ENCODE measurements at regions of chr9 and their contacts with region 1.

Region 1: DNA sequence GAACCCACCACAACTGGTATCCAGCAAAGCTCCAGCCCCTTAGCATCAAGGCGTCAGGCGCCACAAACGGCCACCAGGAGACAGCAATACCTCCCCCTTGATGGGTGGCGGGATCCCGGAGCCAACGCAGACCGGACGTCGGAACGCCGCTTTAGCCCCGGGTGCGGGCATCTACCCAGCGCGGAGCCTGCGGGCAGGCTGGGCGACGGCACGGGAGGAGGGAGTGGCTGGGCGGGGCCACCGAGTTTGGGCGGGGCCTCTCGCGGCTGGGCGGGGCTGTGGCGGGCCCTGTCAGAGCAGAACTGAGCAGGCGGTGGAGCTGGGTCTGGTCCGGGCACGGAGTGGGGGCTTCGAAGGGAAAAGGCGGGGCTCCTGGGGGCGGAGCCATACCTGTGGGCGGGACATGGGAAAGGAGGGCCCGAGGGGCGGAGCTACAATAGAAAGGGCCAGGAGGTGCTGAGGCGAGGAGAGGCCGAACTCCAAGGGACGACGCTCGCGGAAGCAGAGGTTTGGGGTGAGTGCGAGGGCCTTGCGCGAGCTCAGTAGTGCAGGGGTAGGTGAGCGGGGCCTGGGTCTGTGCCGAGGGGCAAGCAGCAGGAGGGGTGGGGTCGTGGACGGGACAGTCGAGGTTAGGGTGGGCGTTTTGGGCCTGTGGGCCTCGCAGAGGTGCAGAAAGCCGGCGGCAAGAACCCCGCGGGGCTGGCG is 40.2 kb upstream of the GARNL3 start:
- DNase-seq: peak; percentile 91 to 96 (median 95)
- ATAC-seq: peak; percentile 88 to 90 (median 88)
- H3K4me3 ChIP-seq: peak overlapping the region; percentile 38 to 96 (median 62)
- H3K27ac ChIP-seq: peak overlapping the region; percentile 66 to 88 (median 82)
- H3K4me1 ChIP-seq: peaks cover 0 to 25% (median 9%) of the 10 kb centered on the region in 12 donors
- H3K27me3 ChIP-seq: no peaks in the 10 kb centered on the region
- CTCF ChIP-seq: peak in 6 of 12 donors; percentile 20 to 38 (median 25)
- POLR2A ChIP-seq: peak in 1 of 2 donors; percentile 30

Region 2: GRCh38 chr9:127177236-127177635 is 47.1 kb before region 1 on chr9:
- intact Hi-C with region 1: no loop called
- DNase-seq: peak in 2 of 5 donors; percentile 6 to 14
- ATAC-seq: no peak
- H3K4me3 ChIP-seq: no peak overlapping the region
- H3K27ac ChIP-seq: no peak overlapping the region
- H3K4me1 ChIP-seq: peaks cover 0 to 46% (median 20%) of the 10 kb centered on the region in 12 donors
- H3K27me3 ChIP-seq: no peaks in the 10 kb centered on the region
- CTCF ChIP-seq: no peak
- POLR2A ChIP-seq: no peak

Region 3: GRCh38 chr9:127283917-127284316 is 59.6 kb after region 1 on chr9:
- intact Hi-C with region 1: loop called in 1 of 10 experiments (anchors 5 kb)
- DNase-seq: no peak
- ATAC-seq: no peak
- H3K4me3 ChIP-seq: no peak overlapping the region
- H3K27ac ChIP-seq: peak overlapping the region in 1 of 12 donors; percentile 49
- H3K4me1 ChIP-seq: peaks cover 0 to 48% (median 7%) of the 10 kb centered on the region in 12 donors
- H3K27me3 ChIP-seq: no peaks in the 10 kb centered on the region
- CTCF ChIP-seq: peak in 8 of 12 donors; percentile 21 to 61 (median 38)
- POLR2A ChIP-seq: no peak

Region 4: DNA sequence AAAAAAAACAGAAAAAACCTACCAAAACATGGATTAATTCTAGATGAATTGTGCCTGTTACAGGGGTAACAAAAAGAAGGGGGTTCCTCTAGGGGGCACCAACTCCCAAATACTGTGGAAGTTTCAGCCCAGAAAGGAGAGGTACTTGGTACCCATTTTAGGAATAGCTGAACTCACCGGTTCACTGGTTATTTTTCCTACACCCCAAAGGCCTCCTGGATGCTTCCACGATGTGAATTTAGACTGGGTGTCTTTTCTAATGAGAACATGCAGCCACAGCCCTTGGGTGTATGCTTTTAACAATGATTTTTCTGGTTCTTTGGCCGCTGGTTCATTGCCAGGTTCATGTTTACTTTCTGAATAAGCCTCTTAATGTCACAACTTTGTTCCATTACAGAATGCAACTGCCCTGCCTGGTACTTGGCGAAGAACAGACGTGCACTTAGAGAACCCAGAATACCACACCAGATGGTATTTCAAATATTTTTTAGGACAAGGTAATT is 87.0 kb after region 1 on chr9:
- intact Hi-C with region 1: loop called in 2 of 10 experiments (anchors 10 kb)
- DNase-seq: peak in 4 of 5 donors; percentile 25 to 45 (median 34)
- ATAC-seq: peak; percentile 25 to 57 (median 54)
- H3K4me3 ChIP-seq: peak overlapping the region in 1 of 12 donors; percentile 7
- H3K27ac ChIP-seq: peak overlapping the region; percentile 45 to 88 (median 72)
- H3K4me1 ChIP-seq: peaks cover 0 to 59% (median 31%) of the 10 kb centered on the region in 12 donors
- H3K27me3 ChIP-seq: no peaks in the 10 kb centered on the region
- CTCF ChIP-seq: peak; percentile 26 to 72 (median 58)
- POLR2A ChIP-seq: no peak

Region 5: GRCh38 chr9:127450830-127451724 is 226.7 kb after region 1 on chr9 and contains the starts of genes LRSAM1 and RPL12:
- intact Hi-C with region 1: loop called in 1 of 10 experiments (anchors 10 kb)
- DNase-seq: peak; percentile 96 to 99 (median 97)
- ATAC-seq: peak; percentile 75 to 87 (median 78)
- H3K4me3 ChIP-seq: peak within 1 kb of the TSS; percentile 64 to 93 (median 89)
- H3K27ac ChIP-seq: peak within 1 kb of the TSS; percentile 90 to 98 (median 95)
- H3K4me1 ChIP-seq: peaks cover 7 to 58% (median 36%) of the 10 kb centered on the region in 12 donors
- H3K27me3 ChIP-seq: no peaks in the 10 kb centered on the region
- CTCF ChIP-seq: peak in 3 of 12 donors; percentile 11 to 27 (median 24)
- POLR2A ChIP-seq: peak; percentile 89 to 99
- total RNA-seq, gene LRSAM1: 21.9 to 42.2 (median 31.6) TPM
- total RNA-seq, gene RPL12: 408 to 937 (median 547) TPM

Region 6: GRCh38 chr9:127734747-127735529 is 510.6 kb after region 1 on chr9 and contains the start of gene TOR2A:
- intact Hi-C with region 1: no loop called
- DNase-seq: peak; percentile 98 to 99 (median 98)
- ATAC-seq: peak; percentile 91 to 96 (median 96)
- H3K4me3 ChIP-seq: peak within 1 kb of the TSS; percentile 40 to 85 (median 74)
- H3K27ac ChIP-seq: peak within 1 kb of the TSS; percentile 89 to 99 (median 94)
- H3K4me1 ChIP-seq: peaks cover 0 to 24% (median 13%) of the 10 kb centered on the region in 12 donors
- H3K27me3 ChIP-seq: no peaks in the 10 kb centered on the region
- CTCF ChIP-seq: peak; percentile 90 to 97 (median 92)
- POLR2A ChIP-seq: peak in 1 of 2 donors; percentile 94
- total RNA-seq, gene TOR2A: 1.7 to 9.2 (median 3.3) TPM